OCI-LY7 (cell line): ENCODE measurements at regions of chr10 and their contacts with region 1.

Region 1: DNA sequence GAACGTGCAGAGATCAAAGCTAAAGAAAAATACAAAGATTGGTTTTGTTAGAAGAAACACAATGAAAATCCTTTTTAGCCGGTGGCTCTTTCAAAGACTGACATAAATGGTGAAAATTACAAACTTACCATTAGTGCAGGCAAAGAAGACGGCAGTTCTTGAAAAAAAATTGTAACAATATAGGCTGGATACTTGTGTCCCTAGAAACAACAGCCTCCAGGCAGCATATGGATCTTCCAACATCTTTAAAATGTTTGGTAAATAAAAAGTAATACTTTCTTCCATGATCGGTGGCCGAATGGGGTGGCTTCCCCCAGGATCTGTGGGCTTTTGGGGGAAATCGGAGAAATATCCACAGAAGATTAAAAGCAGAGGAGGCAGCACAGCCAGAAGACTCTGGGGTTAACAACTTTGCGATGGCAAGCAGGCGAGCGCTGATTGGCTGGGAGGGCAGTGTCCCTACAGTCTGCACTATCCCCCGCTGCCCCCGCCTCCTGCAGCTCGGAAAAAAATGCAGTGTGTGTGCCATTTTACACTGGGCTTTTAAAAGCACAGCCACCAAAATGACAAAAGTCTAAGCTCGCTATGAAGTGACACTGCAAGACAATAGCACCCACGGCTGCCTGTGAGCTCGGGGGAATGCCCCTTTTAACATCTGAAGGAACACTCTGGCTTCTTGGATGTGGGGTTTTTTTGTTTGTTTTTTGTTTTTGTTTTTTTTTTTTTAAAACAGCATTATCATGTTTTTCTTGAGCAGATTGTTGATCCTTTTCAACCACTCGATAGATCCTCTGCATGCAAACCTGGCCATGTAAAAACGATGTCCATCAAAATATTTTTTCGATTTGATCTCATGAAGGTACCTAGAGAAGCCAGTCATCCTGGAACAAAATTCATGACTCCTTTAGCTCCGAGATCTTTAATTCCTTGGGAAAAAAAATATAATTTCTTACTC is 31.7 kb upstream of the EPC1 start:
- DNase-seq: peak; percentile 95
- H3K4me3 ChIP-seq: peak overlapping the region; percentile 89
- H3K27ac ChIP-seq: peak overlapping the region; percentile 82
- H3K4me1 ChIP-seq: peaks cover 14% of the 10 kb centered on the region
- CTCF ChIP-seq: no peak

Region 2: GRCh38 chr10:32055813-32056600 is 322.6 kb before region 1 on chr10 and contains the start of gene KIF5B:
- CTCF ChIA-PET with region 1: no interaction called
- POLR2A ChIA-PET with region 1: interaction called, 4 read pairs
- intact Hi-C with region 1: loop called (anchors 5 kb)
- DNase-seq: peak; percentile 92
- H3K4me3 ChIP-seq: peak within 1 kb of the TSS; percentile 87
- H3K27ac ChIP-seq: peak within 1 kb of the TSS; percentile 78
- H3K4me1 ChIP-seq: peaks cover 37% of the 10 kb centered on the region
- CTCF ChIP-seq: no peak
- total RNA-seq, gene KIF5B: 63.8 and 73.8 TPM in 2 replicates

Region 3: DNA sequence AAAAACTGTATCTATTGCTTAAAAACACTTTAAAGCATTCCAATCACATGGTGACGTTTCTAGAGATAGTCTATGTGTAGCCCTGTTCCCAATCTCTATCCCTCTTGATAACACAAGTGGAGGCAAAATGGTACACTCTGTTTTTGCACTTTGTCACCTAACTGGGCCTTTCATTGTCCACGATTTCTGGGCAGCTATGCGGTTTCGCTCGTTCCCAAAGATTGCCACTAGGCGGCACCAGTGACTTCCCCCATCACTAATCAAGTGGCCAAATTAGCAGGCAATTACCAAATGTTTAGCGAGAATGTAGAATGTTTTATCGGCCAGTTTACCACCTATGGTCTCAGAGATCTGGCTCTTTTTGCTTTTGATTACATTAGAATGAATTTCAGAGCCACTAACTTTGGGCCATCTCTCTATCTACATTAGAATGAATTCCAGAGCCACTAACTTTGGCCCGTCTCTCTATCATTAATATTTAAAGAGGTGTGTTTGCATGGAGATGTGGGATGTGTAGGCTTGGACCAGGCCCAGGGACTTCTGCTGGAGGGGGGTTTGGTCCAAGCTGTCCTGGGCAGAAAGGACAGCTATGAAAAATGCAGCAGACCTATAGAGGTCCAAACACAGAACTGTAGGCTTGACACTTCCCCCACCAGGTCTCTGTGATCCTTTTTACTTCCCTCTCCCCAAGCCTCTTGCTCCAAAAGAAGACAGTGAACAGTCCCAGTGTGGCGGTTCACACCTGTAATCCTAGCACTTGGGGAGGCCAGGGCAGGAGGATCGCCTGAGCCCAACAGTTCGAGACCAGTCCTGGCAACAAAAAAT is 121.8 kb before region 1 on chr10:
- CTCF ChIA-PET with region 1: interaction called, 3 read pairs
- POLR2A ChIA-PET with region 1: interaction called, 10 read pairs
- intact Hi-C with region 1: no loop called
- DNase-seq: peak; percentile 79
- H3K4me3 ChIP-seq: peak overlapping the region; percentile 20
- H3K27ac ChIP-seq: no peak overlapping the region
- H3K4me1 ChIP-seq: peaks cover 7% of the 10 kb centered on the region
- CTCF ChIP-seq: peak; percentile 98

Region 4: GRCh38 chr10:32445740-32446535 is 67.3 kb after region 1 on chr10 and contains the start of gene CCDC7:
- CTCF ChIA-PET with region 1: no interaction called
- POLR2A ChIA-PET with region 1: interaction called, 17 read pairs
- intact Hi-C with region 1: loop called (anchors 1 kb)
- DNase-seq: peak; percentile 93
- H3K4me3 ChIP-seq: peak within 1 kb of the TSS; percentile 79
- H3K27ac ChIP-seq: peak within 1 kb of the TSS; percentile 66
- H3K4me1 ChIP-seq: peaks cover 8% of the 10 kb centered on the region
- CTCF ChIP-seq: peak; percentile 72
- total RNA-seq, gene CCDC7: 9.8 and 10.9 TPM in 2 replicates

Region 5: GRCh38 chr10:32958085-32959005 is 579.7 kb after region 1 on chr10 and contains the start of gene ITGB1:
- CTCF ChIA-PET with region 1: no interaction called
- POLR2A ChIA-PET with region 1: interaction called, 5 read pairs
- intact Hi-C with region 1: loop called (anchors 5 kb)
- DNase-seq: peak; percentile 85
- H3K4me3 ChIP-seq: peak within 1 kb of the TSS; percentile 94
- H3K27ac ChIP-seq: peak within 1 kb of the TSS; percentile 79
- H3K4me1 ChIP-seq: peaks cover 61% of the 10 kb centered on the region
- CTCF ChIP-seq: no peak
- total RNA-seq, gene ITGB1: 165 and 179 TPM in 2 replicates